Dorsolateral prefrontal cortex (tissue), 120 donors: ENCODE measurements at regions of chr14 and their contacts with region 1.

Region 1: GRCh38 chr14:20690848-20691523 is 2.4 kb downstream of the ANG start:
- DNase-seq: peak in 3 of 10 donors; percentile 39 to 56 (median 47)
- H3K4me3 ChIP-seq: peak overlapping the region in 18 of 59 donors; percentile 1 to 34 (median 11)
- H3K27ac ChIP-seq: peak overlapping the region in 9 of 59 donors; percentile 2 to 50 (median 32)
- H3K27me3 ChIP-seq: no peaks in the 10 kb centered on the region
- CTCF ChIP-seq: peak; percentile 55 to 96 (median 89)

Region 2: DNA sequence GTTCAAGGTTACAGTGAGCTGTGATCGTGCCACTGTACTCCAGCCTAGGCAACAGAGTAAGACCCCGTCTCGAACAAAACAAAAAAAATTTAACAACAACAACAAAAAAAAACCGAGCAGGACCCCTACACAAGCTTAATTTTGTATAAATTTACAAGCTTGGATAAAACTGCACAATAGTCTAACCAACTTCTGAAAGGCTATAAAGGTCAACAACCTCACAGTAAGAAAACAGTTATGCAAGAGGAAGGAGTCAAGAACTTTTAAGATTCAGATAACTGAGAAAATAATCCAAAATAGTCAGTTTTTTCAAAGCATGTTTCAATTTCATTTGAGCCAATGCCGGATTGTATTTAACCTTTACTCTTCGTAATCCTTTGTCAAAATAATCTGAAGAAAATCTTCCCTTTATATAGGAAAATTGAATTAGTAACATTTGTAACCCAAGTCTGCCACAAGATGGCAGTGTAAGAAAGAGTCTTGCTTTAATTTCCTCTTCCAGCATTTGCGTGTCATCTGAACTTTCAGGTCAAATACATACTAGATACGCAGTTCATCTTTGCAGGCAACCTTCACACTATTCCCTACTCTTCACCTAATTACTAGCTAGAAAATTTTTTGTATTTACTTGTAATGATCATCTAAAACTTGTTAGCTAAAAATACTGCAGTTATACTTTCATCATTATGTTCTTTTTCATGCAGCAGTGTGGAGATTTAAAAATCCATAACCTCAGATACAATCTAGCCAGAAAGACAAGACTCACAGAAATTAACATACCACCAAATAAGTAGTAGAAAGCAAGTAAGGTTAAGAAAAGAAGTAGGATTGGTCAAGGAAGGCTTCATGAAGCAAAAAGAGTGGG is 363.7 kb before region 1 on chr14:
- intact Hi-C with region 1: loop called in 1 of 2 experiments (anchors 5 kb)
- DNase-seq: peak in 1 of 10 donors; percentile 27
- H3K4me3 ChIP-seq: peak overlapping the region in 35 of 59 donors; percentile 1 to 41 (median 17)
- H3K27ac ChIP-seq: peak overlapping the region in 46 of 59 donors; percentile 0 to 66 (median 42)
- H3K27me3 ChIP-seq: no peaks in the 10 kb centered on the region
- CTCF ChIP-seq: peak; percentile 77 to 97 (median 87)

Region 3: DNA sequence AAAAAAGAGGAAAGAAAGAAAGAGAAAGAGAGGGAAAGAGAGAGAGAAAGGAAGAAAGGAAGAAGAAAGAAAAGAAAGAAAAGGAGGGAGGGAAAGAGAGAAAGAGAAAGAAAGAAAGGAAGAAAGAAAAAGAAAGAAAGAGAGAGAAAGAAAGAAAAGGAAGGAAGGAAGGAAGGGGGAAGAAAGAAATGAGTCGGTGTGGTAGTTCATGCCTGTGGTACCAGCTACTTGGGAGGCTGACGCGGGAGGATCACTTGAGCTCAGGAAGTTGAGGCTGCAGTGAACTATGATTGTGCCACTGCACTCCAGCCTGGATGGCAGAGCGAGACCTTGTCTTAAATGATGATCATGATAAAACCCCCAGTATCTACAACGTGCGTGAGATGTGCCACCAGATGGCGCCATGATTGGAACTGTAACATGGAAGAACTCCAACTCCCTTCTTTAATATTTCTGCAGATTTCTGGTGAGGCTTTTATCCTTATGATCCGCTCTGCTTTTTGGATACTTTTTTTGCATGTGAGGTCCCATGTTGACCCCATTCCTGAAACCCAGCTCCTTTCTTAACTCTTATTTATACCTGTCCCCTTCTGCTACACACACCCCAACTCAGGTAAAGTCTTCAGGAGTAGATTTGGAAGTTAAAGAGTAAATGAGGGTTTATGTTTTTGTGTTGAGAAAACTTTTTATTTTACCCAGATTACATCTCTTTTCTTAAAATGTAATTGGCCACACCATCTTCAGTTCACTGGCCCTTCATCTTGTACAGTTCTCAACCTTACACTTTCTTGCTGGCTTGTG is 160.0 kb before region 1 on chr14:
- intact Hi-C with region 1: loop called (anchors 5 kb)
- DNase-seq: peak in 9 of 10 donors; percentile 38 to 71 (median 44)
- H3K4me3 ChIP-seq: no peak overlapping the region
- H3K27ac ChIP-seq: no peak overlapping the region
- H3K27me3 ChIP-seq: peaks cover 0 to 20% (median 0%) of the 10 kb centered on the region in 45 donors
- CTCF ChIP-seq: peak; percentile 32 to 78 (median 62)

Region 4: DNA sequence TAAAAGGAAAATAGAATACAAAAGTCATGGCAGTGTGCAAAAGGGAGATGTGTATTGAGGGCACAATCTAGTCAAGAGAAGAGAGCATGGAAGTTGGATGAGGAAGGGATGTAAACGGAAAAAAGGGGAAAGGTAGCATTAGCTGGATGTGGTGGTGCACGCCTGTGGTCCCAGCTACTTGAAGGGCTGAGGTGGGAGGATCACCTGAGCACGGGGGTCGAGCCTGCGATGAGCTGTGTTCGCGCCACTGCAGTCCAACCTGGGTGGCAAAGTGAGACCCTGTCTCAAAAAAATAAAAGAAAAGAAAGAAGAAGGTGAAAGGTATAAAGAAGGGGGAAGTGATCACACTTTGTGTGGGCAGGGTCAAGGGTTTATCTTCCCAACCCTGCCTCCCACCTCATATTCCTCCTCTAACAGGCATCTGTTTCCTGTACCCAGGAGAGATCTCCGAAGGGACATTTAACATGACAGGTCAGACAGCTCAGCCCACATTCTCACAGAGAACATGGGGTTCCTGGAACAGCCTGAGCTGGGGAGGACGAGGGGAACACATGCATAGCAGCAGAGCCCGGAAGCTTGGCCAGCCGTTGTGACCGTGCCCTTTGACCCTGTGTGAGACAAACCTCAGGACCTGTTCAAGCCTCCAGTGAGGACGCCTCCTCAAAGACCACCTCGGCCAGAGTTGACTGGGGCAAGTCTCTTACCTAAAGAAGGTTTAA is 112.0 kb before region 1 on chr14:
- intact Hi-C with region 1: no loop called
- DNase-seq: no peak
- H3K4me3 ChIP-seq: no peak overlapping the region
- H3K27ac ChIP-seq: no peak overlapping the region
- H3K27me3 ChIP-seq: peaks cover 0 to 9% (median 0%) of the 10 kb centered on the region in 45 donors
- CTCF ChIP-seq: no peak

Region 5: GRCh38 chr14:20970983-20971704 is 280.2 kb after region 1 on chr14:
- intact Hi-C with region 1: loop called (anchors 10 kb)
- DNase-seq: peak; percentile 66 to 89 (median 76)
- H3K4me3 ChIP-seq: peak overlapping the region; percentile 54 to 97 (median 70)
- H3K27ac ChIP-seq: peak overlapping the region in 55 of 59 donors; percentile 10 to 88 (median 68)
- H3K27me3 ChIP-seq: peaks cover 0 to 20% (median 0%) of the 10 kb centered on the region in 45 donors
- CTCF ChIP-seq: peak; percentile 52 to 88 (median 78)